Naive thymus-derived CD8-positive, alpha-beta T cell (primary cell): ENCODE measurements at regions of chr20 and their contacts with region 1.

Region 1: GRCh38 chr20:44885392-44886265 is at the start of gene YWHAB:
- DNase-seq: peak; percentile 93 to 98 (median 96)
- ATAC-seq: peak; percentile 93 to 96
- H3K4me3 Mint-ChIP-seq: peak within 1 kb of the TSS; percentile 88 to 98 (median 96)
- H3K27ac Mint-ChIP-seq: peak within 1 kb of the TSS; percentile 94 to 99 (median 97)
- H3K4me1 Mint-ChIP-seq: peaks cover 31 to 67% (median 64%) of the 10 kb centered on the region in 4 donors
- H3K27me3 Mint-ChIP-seq: no peaks in the 10 kb centered on the region
- polyA plus RNA-seq, gene YWHAB: 510 to 529 (median 523) TPM

Region 2: GRCh38 chr20:44837946-44838345 is 47.7 kb before region 1 on chr20:
- POLR2A ChIA-PET with region 1: no interaction called
- DNase-seq: no peak
- ATAC-seq: no peak
- H3K4me3 Mint-ChIP-seq: no peak overlapping the region
- H3K27ac Mint-ChIP-seq: no peak overlapping the region
- H3K4me1 Mint-ChIP-seq: no peaks in the 10 kb centered on the region
- H3K27me3 Mint-ChIP-seq: peaks cover 10 to 38% (median 16%) of the 10 kb centered on the region in 5 donors

Region 3: DNA sequence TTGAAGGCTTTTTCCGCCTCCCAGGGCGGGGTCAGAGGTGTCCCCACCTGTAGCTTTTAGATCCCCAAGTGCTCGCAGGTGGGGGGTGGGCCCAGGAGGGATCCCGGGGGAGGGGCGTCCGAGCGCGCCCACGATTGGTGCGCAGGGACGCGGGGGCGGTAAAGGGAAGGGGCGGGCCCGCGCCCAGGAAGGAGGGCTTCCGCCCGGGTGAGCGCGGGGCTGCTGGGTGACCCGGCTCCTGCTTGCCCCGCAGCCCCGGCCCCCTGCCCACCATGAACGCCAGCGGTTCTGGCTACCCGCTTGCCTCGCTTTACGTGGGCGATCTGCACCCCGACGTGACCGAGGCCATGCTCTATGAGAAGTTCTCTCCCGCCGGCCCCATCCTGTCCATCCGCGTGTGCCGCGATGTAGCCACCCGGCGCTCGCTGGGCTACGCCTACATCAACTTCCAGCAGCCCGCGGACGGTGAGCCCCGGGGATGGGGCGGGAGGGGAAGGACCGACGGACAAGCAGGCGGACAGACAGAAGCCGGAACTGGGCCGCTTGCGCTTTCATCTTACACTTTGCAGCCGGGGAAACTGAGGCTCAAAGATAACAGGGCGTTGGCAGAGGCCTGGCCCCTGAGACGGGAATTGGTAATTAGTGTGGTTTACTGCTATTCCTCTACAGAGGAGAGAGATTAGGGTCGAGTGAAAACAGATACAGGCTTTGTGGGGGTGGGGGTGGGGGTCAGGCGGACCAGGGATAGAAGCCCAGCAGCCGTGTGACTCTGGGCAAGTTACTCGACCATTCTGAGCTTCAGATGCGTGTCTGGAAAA is 24.5 kb after region 1 on chr20 and contains the start of gene PABPC1L:
- POLR2A ChIA-PET with region 1: interaction called, 20 read pairs
- DNase-seq: peak; percentile 67 to 85 (median 75)
- ATAC-seq: peak; percentile 95 to 96
- H3K4me3 Mint-ChIP-seq: peak within 1 kb of the TSS; percentile 81 to 90 (median 84)
- H3K27ac Mint-ChIP-seq: peak within 1 kb of the TSS; percentile 24 to 90 (median 56)
- H3K4me1 Mint-ChIP-seq: peaks cover 13 to 39% (median 30%) of the 10 kb centered on the region in 4 donors
- H3K27me3 Mint-ChIP-seq: no peaks in the 10 kb centered on the region
- polyA plus RNA-seq, gene PABPC1L: 0.28 to 0.74 (median 0.73) TPM

Region 4: DNA sequence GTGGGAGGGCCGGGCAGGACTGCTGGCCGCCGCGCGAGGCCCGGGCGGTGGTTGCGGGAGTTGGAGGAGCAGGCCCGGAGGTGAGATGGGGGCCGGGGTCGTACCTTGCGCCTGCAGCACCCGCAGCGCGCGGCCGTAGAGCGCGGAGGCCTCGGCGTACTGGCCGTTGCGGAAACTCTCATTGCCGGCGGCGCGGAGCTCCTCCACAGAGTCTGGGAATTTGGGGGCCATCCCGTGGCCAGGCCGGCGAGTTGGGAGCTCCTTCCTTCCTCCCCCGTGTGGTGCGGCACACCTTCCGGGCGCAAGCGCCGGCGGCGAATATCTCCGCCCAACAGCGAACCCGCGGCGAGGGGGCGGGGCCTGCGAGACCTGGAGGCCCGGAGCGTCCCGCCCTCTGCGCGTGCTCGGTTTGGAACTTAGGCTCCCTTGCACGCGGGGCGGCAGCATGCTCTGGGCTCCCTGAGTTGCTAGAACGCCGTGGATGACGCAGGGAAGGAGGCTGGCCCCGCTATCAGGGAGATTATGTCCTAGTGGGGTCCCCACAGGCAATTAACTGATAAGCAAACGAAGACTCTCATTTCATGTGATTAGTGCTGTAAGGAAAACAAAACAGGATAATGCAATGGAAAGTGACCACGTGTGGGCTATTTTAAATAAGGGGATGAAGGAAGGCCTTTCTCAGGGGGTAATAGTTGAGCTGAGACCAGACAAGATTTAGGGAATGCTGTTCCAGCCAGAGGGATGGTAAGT is 74.6 kb after region 1 on chr20 and contains the start of gene TOMM34:
- POLR2A ChIA-PET with region 1: interaction called, 21 read pairs
- DNase-seq: peak; percentile 86 to 96 (median 91)
- ATAC-seq: peak; percentile 94 to 96
- H3K4me3 Mint-ChIP-seq: peak within 1 kb of the TSS; percentile 83 to 100 (median 98)
- H3K27ac Mint-ChIP-seq: peak within 1 kb of the TSS; percentile 89 to 98 (median 96)
- H3K4me1 Mint-ChIP-seq: peaks cover 32 to 68% (median 58%) of the 10 kb centered on the region in 4 donors
- H3K27me3 Mint-ChIP-seq: no peaks in the 10 kb centered on the region
- polyA plus RNA-seq, gene TOMM34: 12.7 to 27.2 (median 14.5) TPM